Activated CD4-positive, alpha-beta T cell treated with anti-CD3 and anti-CD28 coated beads for 36 hours (primary cell): ENCODE measurements at regions of chr2 and their contacts with region 1.

Region 1: DNA sequence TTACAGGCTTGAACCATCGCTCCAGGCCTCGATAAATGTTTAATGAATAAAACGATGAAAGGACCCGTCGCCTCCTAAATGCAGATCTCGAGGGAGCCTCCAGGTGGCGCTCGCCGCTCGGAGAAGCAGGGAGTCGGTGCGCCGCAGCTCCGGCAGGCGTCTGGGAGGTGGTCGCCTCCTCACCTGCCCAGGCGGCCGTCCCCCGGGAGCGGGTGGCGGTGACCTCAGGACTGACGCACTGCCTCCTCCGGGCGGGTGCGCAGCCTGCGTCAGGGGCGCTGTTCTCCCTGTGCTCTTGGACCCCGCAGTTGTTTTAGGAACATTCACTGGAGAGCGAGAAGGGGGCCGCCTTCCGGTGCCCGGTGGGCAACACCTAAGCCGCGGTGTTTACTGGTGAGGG is 38.6 kb upstream of the POLE4 start:
- DNase-seq: peak; percentile 84
- ATAC-seq: peak; percentile 72
- H3K4me3 Mint-ChIP-seq: no peak overlapping the region
- H3K27ac Mint-ChIP-seq: no peak overlapping the region
- H3K4me1 Mint-ChIP-seq: peaks cover 5% of the 10 kb centered on the region
- H3K27me3 Mint-ChIP-seq: peaks cover 5% of the 10 kb centered on the region

Region 2: GRCh38 chr2:74947703-74948102 is 27.9 kb after region 1 on chr2:
- CTCF ChIA-PET with region 1: no interaction called
- POLR2A ChIA-PET with region 1: no interaction called
- intact Hi-C with region 1: no loop called
- DNase-seq: peak; percentile 7
- ATAC-seq: no peak
- H3K4me3 Mint-ChIP-seq: no peak overlapping the region
- H3K27ac Mint-ChIP-seq: no peak overlapping the region
- H3K4me1 Mint-ChIP-seq: peaks cover 6% of the 10 kb centered on the region
- H3K27me3 Mint-ChIP-seq: no peaks in the 10 kb centered on the region

Region 3: GRCh38 chr2:75241696-75242095 is 321.9 kb after region 1 on chr2:
- CTCF ChIA-PET with region 1: no interaction called
- POLR2A ChIA-PET with region 1: no interaction called
- intact Hi-C with region 1: loop called in 1 of 2 experiments (anchors 1 kb)
- DNase-seq: no peak
- ATAC-seq: no peak
- H3K4me3 Mint-ChIP-seq: no peak overlapping the region
- H3K27ac Mint-ChIP-seq: no peak overlapping the region
- H3K4me1 Mint-ChIP-seq: no peaks in the 10 kb centered on the region
- H3K27me3 Mint-ChIP-seq: peaks cover 5% of the 10 kb centered on the region

Region 4: DNA sequence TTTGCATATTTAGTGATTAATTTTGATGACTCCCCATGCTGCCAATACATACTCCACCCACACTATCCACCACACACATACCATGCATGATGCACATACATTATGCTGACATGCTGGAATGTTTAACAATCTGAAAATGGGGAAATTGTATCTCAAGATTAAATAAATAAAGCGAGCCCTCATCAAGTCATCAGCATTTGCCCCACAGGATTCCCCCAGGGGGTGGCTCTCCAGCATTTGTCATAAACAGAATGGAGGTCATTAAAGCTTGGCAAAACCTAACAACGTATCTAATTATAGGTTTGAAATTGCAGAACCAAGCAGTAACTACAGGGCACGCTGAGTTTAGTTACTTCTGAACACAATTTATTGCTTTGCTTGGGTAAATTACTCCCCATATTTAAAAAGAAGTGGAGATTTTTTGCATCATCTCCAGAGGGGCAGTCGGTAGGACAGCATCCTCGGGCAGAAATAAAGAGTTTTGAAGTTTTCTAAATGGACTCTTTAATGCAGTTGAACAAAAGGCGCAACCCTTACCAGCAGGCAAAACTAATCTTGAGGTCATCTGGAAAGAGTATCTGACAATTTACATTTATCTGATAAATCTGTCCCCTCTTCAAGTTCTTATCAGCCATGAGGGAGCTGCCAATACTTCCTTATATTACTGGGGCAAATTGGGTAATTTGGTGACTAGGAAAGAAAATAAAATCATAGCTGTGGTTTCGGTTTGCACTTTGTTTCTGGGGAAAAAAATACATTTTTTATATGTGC is 420.9 kb after region 1 on chr2:
- CTCF ChIA-PET with region 1: no interaction called
- POLR2A ChIA-PET with region 1: no interaction called
- intact Hi-C with region 1: no loop called
- DNase-seq: no peak
- ATAC-seq: no peak
- H3K4me3 Mint-ChIP-seq: no peak overlapping the region
- H3K27ac Mint-ChIP-seq: no peak overlapping the region
- H3K4me1 Mint-ChIP-seq: no peaks in the 10 kb centered on the region
- H3K27me3 Mint-ChIP-seq: no peaks in the 10 kb centered on the region

Region 5: GRCh38 chr2:75403991-75404428 is 484.2 kb after region 1 on chr2:
- CTCF ChIA-PET with region 1: interaction called, 5 read pairs
- POLR2A ChIA-PET with region 1: no interaction called
- intact Hi-C with region 1: loop called (anchors 1 kb)
- DNase-seq: no peak
- ATAC-seq: peak; percentile 63
- H3K4me3 Mint-ChIP-seq: no peak overlapping the region
- H3K27ac Mint-ChIP-seq: no peak overlapping the region
- H3K4me1 Mint-ChIP-seq: no peaks in the 10 kb centered on the region
- H3K27me3 Mint-ChIP-seq: peaks cover 8% of the 10 kb centered on the region

Region 6: DNA sequence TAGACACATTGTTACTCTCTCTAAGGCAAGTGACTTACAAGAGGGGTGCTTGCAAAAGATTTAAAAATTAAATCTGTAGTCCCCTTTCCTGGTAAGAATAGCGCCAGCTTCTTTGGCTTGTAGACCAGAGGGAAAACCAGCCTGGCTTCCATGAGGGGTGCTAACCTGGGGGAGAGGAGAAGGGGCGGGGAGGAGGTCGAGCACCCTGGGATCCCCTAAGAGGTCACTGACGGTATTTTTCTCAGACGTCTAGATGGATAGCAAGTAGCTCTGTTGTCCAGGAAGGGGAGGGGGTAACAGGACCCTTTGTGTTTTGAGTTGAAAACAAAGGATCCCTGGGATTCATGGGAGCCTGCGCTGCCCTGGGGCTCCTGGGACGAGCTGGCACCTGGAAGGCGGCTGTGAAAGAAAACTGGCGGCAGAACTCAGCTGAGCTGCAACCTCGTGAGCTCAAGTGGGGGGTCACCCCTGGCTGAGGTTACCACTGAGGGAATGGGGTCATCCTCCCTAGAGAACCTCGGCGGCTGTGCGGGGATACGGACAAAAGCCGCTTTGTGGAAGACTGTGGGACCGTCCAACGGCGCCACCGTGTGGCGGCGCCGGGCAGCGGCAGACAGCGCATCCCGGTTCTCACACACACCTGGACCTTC is 689.0 kb after region 1 on chr2:
- CTCF ChIA-PET with region 1: interaction called, 5 read pairs
- POLR2A ChIA-PET with region 1: no interaction called
- intact Hi-C with region 1: loop called (anchors 1 to 2 kb)
- DNase-seq: peak; percentile 72
- ATAC-seq: peak; percentile 81
- H3K4me3 Mint-ChIP-seq: no peak overlapping the region
- H3K27ac Mint-ChIP-seq: no peak overlapping the region
- H3K4me1 Mint-ChIP-seq: peaks cover 6% of the 10 kb centered on the region
- H3K27me3 Mint-ChIP-seq: peaks cover 55% of the 10 kb centered on the region

Region 7: GRCh38 chr2:75627895-75628504 is 708.2 kb after region 1 on chr2:
- CTCF ChIA-PET with region 1: interaction called, 4 read pairs
- POLR2A ChIA-PET with region 1: no interaction called
- intact Hi-C with region 1: loop called in 1 of 2 experiments (anchors 1 kb)
- DNase-seq: peak; percentile 81
- ATAC-seq: peak; percentile 83
- H3K4me3 Mint-ChIP-seq: no peak overlapping the region
- H3K27ac Mint-ChIP-seq: no peak overlapping the region
- H3K4me1 Mint-ChIP-seq: no peaks in the 10 kb centered on the region
- H3K27me3 Mint-ChIP-seq: peaks cover 22% of the 10 kb centered on the region